ENCODE measurements at regions of chr14 and their contacts with region 1.

Region 1: GRCh38 chr14:20343092-20343861 is at the start of gene PARP2:
- DNase-seq: peak; percentile 83 to 97
- ATAC-seq: peak; percentile 80 to 90 (median 82)
- H3K4me3 ChIP-seq: peak within 1 kb of the TSS; percentile 94
- H3K4me3 Mint-ChIP-seq: peak within 1 kb of the TSS; percentile 96
- H3K27ac ChIP-seq: peak within 1 kb of the TSS; percentile 90
- H3K27ac Mint-ChIP-seq: peak within 1 kb of the TSS; percentile 97 to 99
- H3K4me1 ChIP-seq: peaks cover 6% of the 10 kb centered on the region
- H3K4me1 Mint-ChIP-seq: peaks cover 14 to 22% of the 10 kb centered on the region in 2 donors
- H3K27me3 ChIP-seq: no peaks in the 10 kb centered on the region
- H3K27me3 Mint-ChIP-seq: no peaks in the 10 kb centered on the region
- CTCF ChIP-seq: no peak
- total RNA-seq, gene PARP2: 18.2 to 28.3 (median 22.2) TPM

Region 2: DNA sequence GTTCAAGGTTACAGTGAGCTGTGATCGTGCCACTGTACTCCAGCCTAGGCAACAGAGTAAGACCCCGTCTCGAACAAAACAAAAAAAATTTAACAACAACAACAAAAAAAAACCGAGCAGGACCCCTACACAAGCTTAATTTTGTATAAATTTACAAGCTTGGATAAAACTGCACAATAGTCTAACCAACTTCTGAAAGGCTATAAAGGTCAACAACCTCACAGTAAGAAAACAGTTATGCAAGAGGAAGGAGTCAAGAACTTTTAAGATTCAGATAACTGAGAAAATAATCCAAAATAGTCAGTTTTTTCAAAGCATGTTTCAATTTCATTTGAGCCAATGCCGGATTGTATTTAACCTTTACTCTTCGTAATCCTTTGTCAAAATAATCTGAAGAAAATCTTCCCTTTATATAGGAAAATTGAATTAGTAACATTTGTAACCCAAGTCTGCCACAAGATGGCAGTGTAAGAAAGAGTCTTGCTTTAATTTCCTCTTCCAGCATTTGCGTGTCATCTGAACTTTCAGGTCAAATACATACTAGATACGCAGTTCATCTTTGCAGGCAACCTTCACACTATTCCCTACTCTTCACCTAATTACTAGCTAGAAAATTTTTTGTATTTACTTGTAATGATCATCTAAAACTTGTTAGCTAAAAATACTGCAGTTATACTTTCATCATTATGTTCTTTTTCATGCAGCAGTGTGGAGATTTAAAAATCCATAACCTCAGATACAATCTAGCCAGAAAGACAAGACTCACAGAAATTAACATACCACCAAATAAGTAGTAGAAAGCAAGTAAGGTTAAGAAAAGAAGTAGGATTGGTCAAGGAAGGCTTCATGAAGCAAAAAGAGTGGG is 16.0 kb before region 1 on chr14:
- intact Hi-C with region 1: loop called (anchors 2 kb)
- DNase-seq: peak in 1 of 2 donors; percentile 85
- ATAC-seq: peak in 2 of 3 donors; percentile 70 to 75
- H3K4me3 ChIP-seq: no peak overlapping the region
- H3K4me3 Mint-ChIP-seq: no peak overlapping the region
- H3K27ac ChIP-seq: no peak overlapping the region
- H3K27ac Mint-ChIP-seq: peak overlapping the region in 1 of 2 donors; percentile 55
- H3K4me1 ChIP-seq: peaks cover under 1% of the 10 kb centered on the region
- H3K4me1 Mint-ChIP-seq: peaks cover 12 to 14% of the 10 kb centered on the region in 2 donors
- H3K27me3 ChIP-seq: no peaks in the 10 kb centered on the region
- H3K27me3 Mint-ChIP-seq: no peaks in the 10 kb centered on the region
- CTCF ChIP-seq: peak; percentile 81

Region 3: DNA sequence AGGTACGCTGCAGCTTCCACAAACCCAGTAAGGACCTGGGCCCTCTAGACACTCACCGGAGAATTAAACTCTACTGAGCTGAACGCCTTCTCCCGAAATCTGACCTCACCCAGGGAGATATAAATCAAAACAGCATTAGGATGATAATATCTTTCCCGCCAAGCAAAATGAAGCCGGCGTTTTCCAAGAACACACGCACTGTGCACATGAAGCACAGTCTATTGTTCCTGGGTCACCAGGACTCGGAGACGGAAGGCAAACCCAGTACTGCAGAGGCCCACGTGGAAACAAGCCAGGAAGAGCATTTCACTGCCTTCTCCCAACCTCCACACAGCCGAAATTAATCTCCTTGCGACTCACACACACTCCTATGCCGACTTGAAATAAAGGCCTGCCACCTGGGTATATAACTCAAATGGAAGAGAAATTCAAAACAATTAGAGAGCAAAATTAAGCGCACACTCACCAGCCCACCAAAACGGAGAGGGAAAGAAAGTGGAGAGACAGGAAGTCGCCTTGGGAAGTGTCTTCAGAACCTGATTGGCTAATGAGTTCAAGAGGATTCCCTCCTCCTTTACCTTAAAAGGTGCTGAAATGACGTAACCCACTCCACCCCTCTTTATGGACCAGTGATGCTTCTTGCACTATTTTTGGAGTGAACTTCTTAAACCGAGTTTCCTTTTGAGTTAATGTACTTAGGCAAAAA is 10.3 kb before region 1 on chr14 and contains the start of gene CCNB1IP1:
- intact Hi-C with region 1: loop called (anchors 1 kb)
- DNase-seq: peak; percentile 22 to 89
- ATAC-seq: peak; percentile 91 to 99 (median 99)
- H3K4me3 ChIP-seq: peak within 1 kb of the TSS; percentile 59
- H3K4me3 Mint-ChIP-seq: peak within 1 kb of the TSS; percentile 94
- H3K27ac ChIP-seq: peak within 1 kb of the TSS; percentile 43
- H3K27ac Mint-ChIP-seq: peak within 1 kb of the TSS; percentile 88 to 92
- H3K4me1 ChIP-seq: peaks cover 7% of the 10 kb centered on the region
- H3K4me1 Mint-ChIP-seq: peaks cover 20 to 22% of the 10 kb centered on the region in 2 donors
- H3K27me3 ChIP-seq: no peaks in the 10 kb centered on the region
- H3K27me3 Mint-ChIP-seq: no peaks in the 10 kb centered on the region
- CTCF ChIP-seq: no peak
- total RNA-seq, gene CCNB1IP1: 20.8 to 21.5 (median 21.2) TPM

Region 4: GRCh38 chr14:20413045-20413799 is 69.9 kb after region 1 on chr14 and contains the start of gene TEP1:
- intact Hi-C with region 1: loop called (anchors 2 kb)
- DNase-seq: peak; percentile 64 to 82
- ATAC-seq: peak; percentile 73 to 82 (median 76)
- H3K4me3 ChIP-seq: peak within 1 kb of the TSS; percentile 97
- H3K4me3 Mint-ChIP-seq: peak within 1 kb of the TSS; percentile 98
- H3K27ac ChIP-seq: peak within 1 kb of the TSS; percentile 94
- H3K27ac Mint-ChIP-seq: peak within 1 kb of the TSS; percentile 91 to 96
- H3K4me1 ChIP-seq: peaks cover 9% of the 10 kb centered on the region
- H3K4me1 Mint-ChIP-seq: peaks cover 35 to 53% of the 10 kb centered on the region in 2 donors
- H3K27me3 ChIP-seq: no peaks in the 10 kb centered on the region
- H3K27me3 Mint-ChIP-seq: no peaks in the 10 kb centered on the region
- CTCF ChIP-seq: no peak
- total RNA-seq, gene TEP1: 76.3 to 83.2 (median 80.8) TPM

Region 5: GRCh38 chr14:20454516-20455354 is 111.5 kb after region 1 on chr14 and contains the starts of genes APEX1 and OSGEP:
- intact Hi-C with region 1: loop called (anchors 1 kb)
- DNase-seq: peak; percentile 94 to 100
- ATAC-seq: peak; percentile 87 to 92 (median 88)
- H3K4me3 ChIP-seq: peak within 1 kb of the TSS; percentile 79
- H3K4me3 Mint-ChIP-seq: no peak within 1 kb of the TSS
- H3K27ac ChIP-seq: peak within 1 kb of the TSS; percentile 89
- H3K27ac Mint-ChIP-seq: no peak within 1 kb of the TSS
- H3K4me1 ChIP-seq: peaks cover 27% of the 10 kb centered on the region
- H3K4me1 Mint-ChIP-seq: peaks cover 2 to 23% of the 10 kb centered on the region in 2 donors
- H3K27me3 ChIP-seq: no peaks in the 10 kb centered on the region
- H3K27me3 Mint-ChIP-seq: no peaks in the 10 kb centered on the region
- CTCF ChIP-seq: no peak
- total RNA-seq, gene APEX1: 66.0 to 77.6 (median 74.9) TPM
- total RNA-seq, gene OSGEP: 60.1 to 65.4 (median 63.3) TPM